ENCODE measurements at regions of chr1 and their contacts with region 1.

Region 1: DNA sequence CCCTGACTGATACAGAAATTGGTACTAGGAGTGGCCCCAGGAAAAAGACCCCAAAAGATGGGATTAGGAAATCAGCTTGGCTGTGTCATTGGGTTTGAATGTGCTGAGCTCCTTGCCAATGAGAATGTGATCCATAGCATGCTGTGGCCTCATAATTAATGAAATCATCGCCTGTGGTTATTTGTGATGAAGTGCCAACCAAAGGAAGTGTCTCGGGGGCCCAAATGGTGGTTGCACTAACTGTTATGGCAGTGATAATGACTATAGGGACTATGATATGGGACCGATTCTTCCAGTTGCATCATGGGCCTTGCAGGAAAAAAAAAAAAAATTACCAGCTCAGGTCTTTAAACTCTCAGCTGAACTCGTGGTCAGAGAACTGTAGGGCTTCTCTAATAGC is 15.4 kb upstream of the ZDHHC18 start:
- DNase-seq: no peak
- CTCF ChIP-seq: no peak

Region 2: GRCh38 chr1:26799479-26800142 is 11.4 kb before region 1 on chr1:
- CTCF ChIA-PET with region 1: interaction called, 29 read pairs
- POLR2A ChIA-PET with region 1: no interaction called
- DNase-seq: no peak
- CTCF ChIP-seq: no peak

Region 3: DNA sequence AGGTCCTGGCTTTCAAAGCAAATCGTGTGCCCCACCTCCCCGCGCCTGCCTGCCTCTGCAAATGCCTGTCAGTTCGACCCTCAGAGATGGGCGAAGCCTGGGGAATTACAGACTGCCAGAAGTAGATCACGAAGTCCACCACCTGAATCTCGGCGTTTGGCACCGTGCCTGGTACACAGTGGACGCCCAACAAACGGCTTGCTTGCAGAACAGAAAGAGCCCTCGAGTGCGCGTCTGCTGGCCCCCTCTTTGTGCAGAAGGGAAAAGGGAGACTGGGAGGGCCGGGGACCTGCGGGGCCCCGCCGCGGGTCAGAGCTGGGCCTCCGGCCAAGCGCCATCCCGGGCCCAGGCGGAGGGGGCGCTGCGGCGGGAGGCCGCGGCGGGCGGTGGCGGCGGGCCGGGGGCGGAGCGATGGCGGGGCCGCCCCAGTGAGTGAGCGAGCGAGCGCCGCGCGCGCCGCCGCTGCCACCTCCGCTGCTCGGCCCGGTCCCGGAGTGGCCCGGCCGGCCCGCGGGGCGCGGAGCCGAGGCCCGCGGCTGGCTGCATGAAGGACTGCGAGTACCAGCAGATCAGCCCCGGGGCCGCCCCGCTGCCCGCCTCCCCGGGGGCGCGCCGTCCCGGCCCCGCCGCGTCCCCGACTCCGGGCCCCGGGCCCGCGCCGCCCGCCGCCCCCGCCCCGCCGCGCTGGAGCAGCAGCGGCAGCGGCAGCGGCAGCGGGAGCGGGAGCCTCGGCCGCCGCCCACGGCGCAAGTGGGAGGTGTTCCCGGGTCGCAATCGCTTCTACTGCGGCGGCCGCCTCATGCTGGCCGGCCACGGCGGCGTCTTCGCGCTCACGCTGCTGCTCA is 15.4 kb after region 1 on chr1 and contains the start of gene ZDHHC18:
- CTCF ChIA-PET with region 1: interaction called, 51 read pairs
- POLR2A ChIA-PET with region 1: no interaction called
- DNase-seq: peak; percentile 88
- CTCF ChIP-seq: peak; percentile 75

Region 4: GRCh38 chr1:26833432-26834405 is 22.7 kb after region 1 on chr1:
- CTCF ChIA-PET with region 1: interaction called, 42 read pairs
- POLR2A ChIA-PET with region 1: no interaction called
- DNase-seq: peak; percentile 91
- CTCF ChIP-seq: peak; percentile 47

Region 5: GRCh38 chr1:26858160-26858559 is 47.1 kb after region 1 on chr1:
- CTCF ChIA-PET with region 1: interaction called, 28 read pairs
- POLR2A ChIA-PET with region 1: no interaction called
- DNase-seq: no peak
- CTCF ChIP-seq: no peak

Region 6: GRCh38 chr1:26864610-26865527 is 53.8 kb after region 1 on chr1:
- CTCF ChIA-PET with region 1: interaction called, 28 read pairs
- POLR2A ChIA-PET with region 1: interaction called, 3 read pairs
- DNase-seq: peak; percentile 96
- CTCF ChIP-seq: peak; percentile 7

Region 7: GRCh38 chr1:26882696-26883463 is 71.8 kb after region 1 on chr1:
- CTCF ChIA-PET with region 1: interaction called, 49 read pairs
- POLR2A ChIA-PET with region 1: no interaction called
- DNase-seq: no peak
- CTCF ChIP-seq: no peak